HEK293T (cell line): ENCODE measurements at regions of chr6 and their contacts with region 1.

Region 1: DNA sequence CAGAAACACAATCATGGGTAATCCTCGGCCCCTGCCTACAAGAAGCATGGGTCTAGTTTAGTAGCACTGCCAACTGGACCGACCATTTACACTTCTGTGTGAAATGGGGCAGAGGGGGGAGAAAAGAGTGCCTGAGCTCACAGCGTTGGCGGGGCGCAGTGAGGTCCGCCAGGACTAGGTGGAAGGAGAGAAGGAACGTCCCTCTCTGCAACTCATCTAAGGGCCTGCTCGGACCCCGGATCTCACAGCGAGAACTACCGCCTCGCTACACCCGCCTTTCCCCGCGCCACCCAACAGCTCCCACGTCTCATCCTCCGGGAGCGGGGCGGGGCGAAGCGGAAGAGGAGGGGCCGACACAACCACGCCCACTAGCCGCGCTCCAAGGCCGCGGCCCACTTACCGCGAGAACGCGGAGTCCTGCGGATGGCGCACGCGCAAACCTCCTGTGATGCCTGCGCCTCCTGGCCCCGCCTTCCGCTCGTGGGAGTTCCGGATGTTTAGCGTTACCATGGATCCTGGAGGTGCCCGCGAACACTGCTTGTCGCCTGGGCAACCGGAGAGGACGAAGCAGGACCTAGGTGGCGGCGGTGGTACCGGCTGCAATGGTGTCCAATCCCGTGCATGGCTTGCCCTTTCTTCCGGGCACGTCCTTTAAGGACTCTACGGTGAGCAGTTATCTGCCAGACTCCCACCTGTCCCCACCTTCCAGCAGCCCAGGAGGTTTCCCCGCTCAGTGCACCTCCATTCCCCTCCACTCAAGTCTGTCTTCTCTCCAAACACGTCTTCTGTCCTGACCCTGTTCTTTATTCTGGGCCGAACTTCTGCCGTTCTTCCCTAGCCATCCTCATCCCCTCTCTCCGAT is at the start of gene EFHC1:
- DNase-seq: peak; percentile 98

Region 2: DNA sequence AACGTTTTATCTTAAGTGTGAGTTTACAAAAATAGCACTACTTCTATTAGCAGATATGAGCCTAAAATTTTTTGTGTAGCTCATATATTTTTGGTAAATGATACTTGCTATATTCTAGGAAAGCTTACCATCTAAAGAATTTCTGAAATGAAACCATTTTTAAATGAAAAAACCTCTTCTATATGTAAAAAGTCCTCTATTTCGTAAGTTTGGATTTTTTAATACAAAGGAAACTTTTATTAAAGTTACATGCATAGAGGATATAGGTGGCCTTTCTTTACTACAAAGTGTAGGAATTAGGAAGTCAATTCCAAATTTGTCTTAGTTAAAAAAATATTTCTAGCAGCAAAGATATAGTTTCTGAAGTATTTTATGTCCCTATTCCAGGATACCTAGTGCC is 18.9 kb after region 1 on chr6:
- CTCF ChIA-PET with region 1: no interaction called
- POLR2A ChIA-PET with region 1: no interaction called
- DNase-seq: no peak

Region 3: GRCh38 chr6:52577022-52577777 is 157.2 kb after region 1 on chr6 and contains the start of gene TRAM2:
- CTCF ChIA-PET with region 1: interaction called, 3 read pairs
- POLR2A ChIA-PET with region 1: interaction called, 10 read pairs
- DNase-seq: peak; percentile 90

Region 4: GRCh38 chr6:52598123-52598823 is 178.2 kb after region 1 on chr6:
- CTCF ChIA-PET with region 1: interaction called, 5 read pairs
- POLR2A ChIA-PET with region 1: interaction called, 16 read pairs
- DNase-seq: peak; percentile 87

Region 5: GRCh38 chr6:52664186-52664990 is 244.3 kb after region 1 on chr6:
- CTCF ChIA-PET with region 1: interaction called, 8 read pairs
- POLR2A ChIA-PET with region 1: interaction called, 13 read pairs
- DNase-seq: peak; percentile 92